ENCODE measurements at regions of chr12 and their contacts with region 1.

Region 1: DNA sequence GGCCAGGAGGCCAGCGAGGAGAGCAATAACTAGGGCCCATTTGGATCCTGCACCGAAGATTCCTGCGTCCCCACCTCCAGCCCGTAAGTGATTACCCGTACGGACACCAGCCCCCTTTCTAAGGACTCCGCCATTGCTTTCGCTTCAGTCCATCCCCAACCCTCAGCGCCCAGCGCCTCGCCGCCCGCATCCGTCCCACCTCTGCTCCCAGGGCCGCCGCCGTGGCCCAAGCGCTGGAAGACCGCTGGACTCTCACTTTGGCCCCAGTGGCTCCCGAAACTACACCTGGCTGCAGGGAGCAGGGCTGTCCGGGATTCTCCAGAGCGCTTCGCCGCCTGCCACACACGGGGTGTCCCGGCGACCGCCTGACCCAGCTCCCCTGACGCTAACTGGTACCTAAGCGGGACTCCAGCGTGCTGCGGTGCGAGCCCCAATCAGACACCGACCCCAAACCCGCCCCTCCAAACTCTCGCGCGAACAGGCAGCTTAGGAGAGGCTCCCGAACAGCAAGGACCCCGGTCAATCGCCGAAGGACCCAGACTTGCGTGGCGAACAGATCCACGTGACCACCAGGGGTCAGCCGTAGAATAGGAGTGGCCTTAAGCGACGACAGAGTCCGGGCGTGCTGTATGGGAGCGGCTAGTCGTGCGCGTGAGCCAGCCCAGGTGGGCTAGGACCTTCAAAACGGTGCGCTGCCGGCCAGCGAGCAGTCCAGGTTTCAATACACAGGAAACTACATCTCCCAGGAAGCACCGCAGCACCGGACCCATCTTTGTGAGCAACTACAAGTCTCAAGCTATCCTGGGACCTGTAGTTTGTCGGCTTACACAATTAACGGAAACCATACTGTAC is at the start of gene CNPY2:
- DNase-seq: peak; percentile 98 to 99
- H3K4me3 ChIP-seq: peak within 1 kb of the TSS; percentile 79
- H3K4me3 Mint-ChIP-seq: peak within 1 kb of the TSS; percentile 85
- H3K27ac Mint-ChIP-seq: peak within 1 kb of the TSS; percentile 96
- H3K4me1 ChIP-seq: peaks cover 4% of the 10 kb centered on the region; the same call in 1 of the 2 replicates
- H3K4me1 Mint-ChIP-seq: no peaks in the 10 kb centered on the region
- H3K27me3 ChIP-seq: no peaks in the 10 kb centered on the region
- H3K27me3 Mint-ChIP-seq: no peaks in the 10 kb centered on the region
- CTCF ChIP-seq: peak; percentile 22 to 27
- total RNA-seq, gene CNPY2: 204 and 208 TPM in 2 replicates

Region 2: DNA sequence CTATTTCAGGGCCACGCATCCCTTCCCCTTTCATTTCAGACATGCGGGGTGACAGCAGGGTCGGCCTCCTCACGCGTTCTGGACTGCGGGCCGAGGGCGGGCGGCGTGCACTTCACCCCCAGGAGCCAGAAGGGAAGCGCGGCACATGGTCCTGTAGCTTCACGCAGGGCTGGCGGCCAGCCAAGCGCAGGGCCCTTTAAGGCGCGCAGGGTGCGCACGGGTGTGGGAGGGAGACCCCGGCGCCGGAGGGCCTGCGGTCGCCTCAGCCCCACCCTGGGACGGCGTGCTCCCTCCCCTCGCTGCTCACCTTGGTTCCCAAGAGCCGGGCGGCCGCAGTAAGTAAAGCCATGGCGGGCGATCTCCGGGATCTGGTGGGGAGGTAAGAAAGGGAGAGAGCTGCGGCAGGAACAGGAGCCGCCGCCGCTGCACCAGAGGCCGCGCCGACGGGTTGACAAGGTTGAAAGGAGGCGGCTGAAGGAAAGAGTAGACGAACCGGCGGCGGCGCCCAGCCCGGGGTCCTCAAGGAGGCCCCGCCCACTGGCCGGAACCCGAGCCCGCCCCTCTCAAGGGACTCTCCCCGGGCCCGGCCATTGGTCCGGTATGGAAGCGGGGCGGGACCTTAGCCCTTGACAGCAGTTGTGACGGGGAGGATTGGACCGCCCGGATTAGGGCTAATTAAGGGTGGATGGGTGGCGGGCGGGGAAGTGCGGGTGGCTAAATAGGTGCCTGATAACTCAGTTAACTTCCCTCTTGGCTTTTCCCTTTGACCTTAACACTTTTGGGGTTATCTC is 15.8 kb before region 1 on chr12 and contains the start of gene CS:
- CTCF ChIA-PET with region 1: no interaction called
- POLR2A ChIA-PET with region 1: interaction called, 7 read pairs
- intact Hi-C with region 1: loop called (anchors 1 kb)
- DNase-seq: peak; percentile 99
- H3K4me3 ChIP-seq: peak within 1 kb of the TSS; percentile 63
- H3K4me3 Mint-ChIP-seq: peak within 1 kb of the TSS; percentile 94
- H3K27ac Mint-ChIP-seq: peak within 1 kb of the TSS; percentile 95
- H3K4me1 ChIP-seq: peaks cover 10% of the 10 kb centered on the region
- H3K4me1 Mint-ChIP-seq: peaks cover 17% of the 10 kb centered on the region
- H3K27me3 ChIP-seq: no peaks in the 10 kb centered on the region
- H3K27me3 Mint-ChIP-seq: no peaks in the 10 kb centered on the region
- CTCF ChIP-seq: no peak
- total RNA-seq, gene CS: 241 and 263 TPM in 2 replicates

Region 3: GRCh38 chr12:56333679-56334489 is 18.0 kb after region 1 on chr12 and contains the start of gene PAN2:
- CTCF ChIA-PET with region 1: interaction called, 4 read pairs
- POLR2A ChIA-PET with region 1: no interaction called
- intact Hi-C with region 1: loop called (anchors 1 kb)
- DNase-seq: peak; percentile 94 to 97
- H3K4me3 ChIP-seq: peak within 1 kb of the TSS; percentile 63
- H3K4me3 Mint-ChIP-seq: peak within 1 kb of the TSS; percentile 98
- H3K27ac Mint-ChIP-seq: peak within 1 kb of the TSS; percentile 99
- H3K4me1 ChIP-seq: peaks cover 17% of the 10 kb centered on the region
- H3K4me1 Mint-ChIP-seq: peaks cover 8% of the 10 kb centered on the region
- H3K27me3 ChIP-seq: no peaks in the 10 kb centered on the region
- H3K27me3 Mint-ChIP-seq: no peaks in the 10 kb centered on the region
- CTCF ChIP-seq: peak; percentile 65 to 77
- total RNA-seq, gene PAN2: 25.7 and 30.0 TPM in 2 replicates

Region 4: DNA sequence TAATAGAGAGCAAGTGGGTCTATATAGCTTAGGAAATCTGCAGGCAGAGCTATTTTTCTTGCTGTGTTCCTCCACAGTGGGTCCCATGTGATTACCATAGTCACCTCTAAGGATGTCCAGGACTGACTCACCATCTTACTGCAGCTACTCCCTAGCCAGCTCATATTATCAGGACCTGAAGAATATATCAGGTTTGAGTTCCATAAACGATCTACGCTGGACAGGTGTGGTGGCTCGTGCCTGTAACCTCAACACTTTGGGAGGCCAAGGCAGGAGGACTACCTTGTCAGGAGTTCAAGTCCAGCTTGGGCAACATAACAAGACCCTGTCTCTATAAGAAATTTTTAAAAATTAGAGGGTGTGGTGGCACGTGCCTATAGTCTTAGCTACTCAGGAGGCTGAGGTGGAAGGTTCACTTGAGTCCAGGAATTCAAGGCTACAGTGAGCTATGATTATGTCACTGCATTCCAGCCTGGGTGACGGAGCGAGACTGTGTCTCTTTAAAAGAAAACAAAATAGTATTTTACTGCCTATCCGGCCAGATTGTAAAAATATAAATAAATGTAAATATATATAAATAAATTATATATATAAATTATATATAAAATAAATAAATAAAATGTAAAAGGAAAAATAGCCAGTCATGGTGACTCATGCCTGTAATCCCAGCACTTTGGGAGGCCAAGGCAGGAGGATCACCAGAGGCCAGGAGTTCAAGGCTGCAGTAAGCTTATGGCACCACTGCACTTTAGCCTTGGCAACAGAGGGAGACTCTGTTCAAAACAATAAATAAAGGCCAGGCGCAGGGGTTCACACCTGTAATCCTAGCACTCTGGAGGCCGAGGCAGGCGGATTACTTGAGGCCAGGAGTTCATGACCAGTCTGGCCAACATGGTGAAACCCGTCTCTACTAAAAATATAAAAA is 145.6 kb after region 1 on chr12:
- CTCF ChIA-PET with region 1: interaction called, 38 read pairs
- POLR2A ChIA-PET with region 1: interaction called, 3 read pairs
- intact Hi-C with region 1: loop called (anchors 1 kb)
- DNase-seq: no peak
- H3K4me3 ChIP-seq: no peak overlapping the region
- H3K4me3 Mint-ChIP-seq: no peak overlapping the region
- H3K27ac Mint-ChIP-seq: no peak overlapping the region
- H3K4me1 ChIP-seq: peaks cover 6% of the 10 kb centered on the region; the same call in 1 of the 2 replicates
- H3K4me1 Mint-ChIP-seq: no peaks in the 10 kb centered on the region
- H3K27me3 ChIP-seq: no peaks in the 10 kb centered on the region
- H3K27me3 Mint-ChIP-seq: no peaks in the 10 kb centered on the region
- CTCF ChIP-seq: no peak

Measured in Caco-2 (cell line).